BJ (cell line): ENCODE measurements at regions of chr5 and their contacts with region 1.

Region 1: DNA sequence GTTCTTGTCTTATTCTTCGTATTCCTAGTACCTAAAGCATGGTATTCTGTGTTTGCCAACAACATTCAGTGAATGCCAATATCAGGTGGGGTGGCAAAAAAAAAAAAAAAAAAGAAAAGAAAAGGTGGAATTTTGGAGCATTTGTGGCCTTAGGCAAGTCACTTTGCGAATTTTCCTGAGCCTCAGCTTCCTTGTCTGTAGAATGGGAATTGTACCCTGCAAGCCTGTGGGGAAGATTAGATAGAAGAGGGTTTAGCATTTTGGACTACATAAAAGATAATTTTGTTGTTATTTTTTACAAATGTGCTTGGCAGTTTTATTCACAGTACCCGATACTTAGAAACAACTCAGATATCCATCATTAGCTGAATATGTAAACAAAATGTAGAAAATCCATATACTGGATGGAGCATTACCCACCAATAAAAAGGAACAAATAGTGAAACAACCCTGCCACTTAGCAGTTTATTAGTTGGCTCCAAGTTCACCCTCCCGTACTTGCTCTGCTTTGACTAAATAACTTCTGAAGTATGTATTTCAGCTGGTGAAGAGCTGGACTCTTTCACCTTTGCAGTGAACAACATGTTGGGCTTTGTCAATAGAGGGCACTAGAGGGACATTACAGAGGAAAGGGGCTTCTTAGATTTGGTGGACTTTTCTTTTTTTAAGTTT is 13.6 kb downstream of the UBE2D2 start:
- DNase-seq: no peak
- H3K4me3 ChIP-seq: no peak overlapping the region
- H3K27me3 ChIP-seq: no peaks in the 10 kb centered on the region
- CTCF ChIP-seq: peak; percentile 75

Region 2: DNA sequence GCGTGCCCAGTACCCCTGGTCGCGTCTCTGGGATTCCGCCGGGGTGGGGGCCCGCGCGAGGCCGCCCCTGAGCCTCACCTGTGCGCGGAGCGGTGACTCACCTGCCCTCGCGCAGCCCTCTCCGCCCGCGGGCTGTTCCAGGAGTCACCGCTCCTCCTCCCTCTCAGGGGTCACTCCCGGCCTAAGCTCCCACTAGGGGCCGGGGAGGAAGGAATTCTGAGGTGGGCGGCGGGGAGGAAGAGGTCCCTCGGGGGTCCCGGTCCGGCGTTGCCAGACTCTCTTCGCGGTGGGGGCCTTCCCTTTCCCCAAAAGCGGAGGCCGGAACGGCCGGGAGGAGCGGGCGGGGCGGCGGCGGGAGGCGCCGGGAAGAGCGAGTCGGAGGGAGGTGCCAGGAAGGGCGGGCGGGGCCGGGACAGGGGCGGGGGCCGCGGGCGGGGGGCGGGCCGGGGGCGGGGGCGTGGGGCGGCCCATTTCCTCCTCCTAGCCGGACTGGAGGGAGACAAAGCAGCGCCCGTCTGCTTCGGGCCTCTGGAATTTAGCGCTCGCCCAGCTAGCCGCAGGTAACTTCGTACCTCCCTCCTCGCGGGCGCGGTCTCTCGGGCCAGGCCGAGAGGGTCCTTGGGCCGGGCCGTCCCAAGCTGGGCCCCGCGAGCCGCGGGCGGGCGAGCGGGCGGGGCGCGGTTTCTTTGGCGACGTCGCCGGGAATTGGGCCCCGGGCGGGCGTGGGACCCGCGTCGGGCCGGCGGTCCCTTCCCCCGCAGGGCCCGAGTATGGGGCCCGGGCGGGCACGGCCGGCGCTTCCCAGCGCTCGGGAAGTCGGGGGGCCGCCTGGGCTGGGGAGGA is 821.6 kb before region 1 on chr5 and contains the start of gene CTNNA1:
- CTCF ChIA-PET with region 1: no interaction called
- POLR2A ChIA-PET with region 1: interaction called, 11 read pairs
- DNase-seq: no peak
- H3K4me3 ChIP-seq: peak within 1 kb of the TSS; percentile 61
- H3K27me3 ChIP-seq: no peaks in the 10 kb centered on the region
- CTCF ChIP-seq: no peak
- polyA plus RNA-seq, gene CTNNA1: 122 and 169 TPM in 2 replicates

Region 3: DNA sequence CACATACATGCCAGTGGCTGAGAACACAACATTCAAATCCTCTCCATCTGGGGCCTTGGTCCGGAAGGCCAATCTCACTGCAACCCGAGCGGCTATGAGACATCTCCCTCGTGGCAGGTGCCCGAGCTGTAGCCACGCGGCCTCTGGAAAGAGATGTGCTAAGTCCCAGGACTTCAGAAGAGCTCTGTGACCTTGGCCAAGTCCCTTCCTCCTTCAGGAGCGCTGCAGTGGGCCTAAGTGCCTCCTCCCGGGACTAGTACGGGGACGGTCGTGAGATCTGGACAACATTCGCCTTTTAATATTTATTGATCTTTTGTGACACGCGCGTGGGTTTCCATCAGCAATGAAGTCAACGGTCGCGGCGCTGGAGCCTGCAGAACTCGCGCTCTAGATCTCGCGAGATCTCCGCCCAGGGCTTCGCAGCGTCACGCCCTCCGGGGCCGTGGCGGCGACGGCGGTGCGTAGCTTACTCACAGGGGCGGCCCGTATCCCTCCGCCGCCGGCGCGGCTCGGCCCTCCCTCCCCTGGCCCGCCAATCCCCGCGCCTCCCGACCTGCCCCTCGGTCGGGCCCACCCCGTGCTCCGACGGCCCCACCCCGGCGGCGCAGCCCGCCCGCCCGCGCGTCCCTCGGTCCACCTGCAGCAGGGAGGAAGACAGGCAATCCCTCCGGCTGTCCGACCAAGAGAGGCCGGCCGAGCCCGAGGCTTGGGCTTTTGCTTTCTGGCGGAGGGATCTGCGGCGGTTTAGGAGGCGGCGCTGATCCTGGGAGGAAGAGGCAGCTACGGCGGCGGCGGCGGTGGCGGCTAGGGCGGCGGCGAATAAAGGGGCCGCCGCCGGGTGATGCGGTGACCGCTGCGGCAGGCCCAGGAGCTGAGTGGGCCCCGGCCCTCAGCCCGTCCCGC is 13.8 kb before region 1 on chr5 and contains the start of gene UBE2D2:
- CTCF ChIA-PET with region 1: interaction called, 17 read pairs
- POLR2A ChIA-PET with region 1: no interaction called
- DNase-seq: peak; percentile 73
- H3K4me3 ChIP-seq: peak within 1 kb of the TSS; percentile 72
- H3K27me3 ChIP-seq: no peaks in the 10 kb centered on the region
- CTCF ChIP-seq: no peak
- polyA plus RNA-seq, gene UBE2D2: 18.2 and 48.7 TPM in 2 replicates